ENCODE measurements at regions of chr1 and their contacts with region 1.

Region 1: DNA sequence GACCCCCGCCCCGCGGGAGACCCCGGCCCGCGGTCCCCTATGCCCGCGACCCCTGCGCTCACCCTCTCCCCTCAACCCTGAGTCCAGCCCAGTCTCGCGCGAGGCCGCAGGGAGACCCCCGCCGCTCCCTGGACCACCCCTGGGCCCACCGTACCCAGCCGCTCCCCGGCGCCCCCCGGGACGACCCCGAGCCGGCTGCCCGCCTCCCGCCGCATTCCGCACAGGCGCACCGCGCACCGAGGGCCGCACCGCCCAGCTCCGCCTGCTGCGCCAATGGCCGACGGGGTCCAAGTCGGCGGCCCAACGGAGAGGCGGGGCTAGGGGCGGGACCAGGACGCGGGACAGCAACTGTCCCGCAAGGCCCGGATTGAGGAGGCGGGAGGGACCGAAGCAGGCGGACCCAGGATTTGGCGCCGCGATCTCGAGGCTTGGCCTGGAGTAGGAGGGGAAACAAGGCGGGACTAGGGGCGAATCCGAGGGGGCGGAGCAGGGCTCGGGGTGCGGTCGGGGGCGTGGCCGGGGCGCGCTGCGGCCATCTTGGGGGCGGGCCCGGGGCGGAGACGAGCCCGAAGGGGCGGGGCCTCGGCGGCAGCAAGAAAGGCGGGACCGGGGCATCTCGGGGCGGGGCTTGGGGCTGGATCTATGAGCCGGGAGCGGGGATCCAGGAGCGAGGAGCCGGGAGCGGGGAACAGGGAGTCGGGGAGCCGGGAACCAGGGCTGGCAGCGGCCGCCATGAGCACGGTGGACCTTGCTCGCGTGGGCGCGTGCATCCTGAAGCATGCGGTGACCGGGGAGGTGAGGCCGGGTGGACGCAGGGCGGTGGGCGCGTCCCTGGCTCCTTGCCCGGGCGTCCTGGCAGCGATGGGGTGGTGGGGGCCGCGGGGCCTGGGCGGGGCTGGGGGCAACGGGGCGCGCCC is at the start of gene PRXL2B:
- DNase-seq: peak; percentile 99
- CTCF ChIP-seq: no peak

Region 2: DNA sequence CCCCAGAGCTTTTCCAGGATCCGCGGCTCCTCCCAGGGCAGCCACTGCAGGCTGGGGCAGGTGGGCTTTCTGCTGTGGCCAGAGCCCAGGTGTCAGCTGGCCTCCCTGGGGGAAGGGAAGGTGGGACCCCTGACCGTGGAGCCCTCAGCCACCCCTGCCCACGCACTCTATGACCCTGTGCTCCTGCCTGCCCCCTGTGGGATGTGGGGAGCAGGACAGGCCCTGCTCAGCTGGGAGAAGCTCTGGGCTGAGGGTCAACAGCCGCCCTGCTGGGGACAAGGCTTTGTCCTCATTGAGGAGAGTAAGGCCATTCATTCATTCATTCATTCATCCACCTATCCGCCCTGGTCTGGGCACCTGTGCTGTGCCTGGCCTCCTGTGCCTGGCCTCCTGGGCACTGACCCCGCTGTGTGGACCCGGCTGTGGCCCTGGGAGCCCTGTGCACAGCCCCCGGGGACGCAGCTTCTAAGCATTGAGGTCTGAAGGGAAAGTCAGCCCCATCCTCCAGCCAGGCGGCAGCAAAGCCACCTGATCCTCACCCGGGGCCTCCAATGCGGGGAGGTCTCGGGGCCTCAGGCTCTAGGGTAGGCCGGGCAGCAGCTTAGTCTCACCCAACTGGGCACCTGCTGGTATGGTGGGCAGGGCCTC is 24.4 kb before region 1 on chr1:
- CTCF ChIA-PET with region 1: interaction called, 40 read pairs
- POLR2A ChIA-PET with region 1: interaction called, 12 read pairs
- DNase-seq: no peak
- CTCF ChIP-seq: peak; percentile 40